Calu3 (cell line): ENCODE measurements at regions of chr17 and their contacts with region 1.

Region 1: GRCh38 chr17:13460261-13461000 is 141.3 kb downstream of the HS3ST3A1 start:
- DNase-seq: no peak
- H3K4me3 Mint-ChIP-seq: no peak overlapping the region
- H3K27ac Mint-ChIP-seq: no peak overlapping the region
- H3K4me1 Mint-ChIP-seq: no peaks in the 10 kb centered on the region
- H3K27me3 Mint-ChIP-seq: no peaks in the 10 kb centered on the region
- CTCF ChIP-seq: no peak

Region 2: DNA sequence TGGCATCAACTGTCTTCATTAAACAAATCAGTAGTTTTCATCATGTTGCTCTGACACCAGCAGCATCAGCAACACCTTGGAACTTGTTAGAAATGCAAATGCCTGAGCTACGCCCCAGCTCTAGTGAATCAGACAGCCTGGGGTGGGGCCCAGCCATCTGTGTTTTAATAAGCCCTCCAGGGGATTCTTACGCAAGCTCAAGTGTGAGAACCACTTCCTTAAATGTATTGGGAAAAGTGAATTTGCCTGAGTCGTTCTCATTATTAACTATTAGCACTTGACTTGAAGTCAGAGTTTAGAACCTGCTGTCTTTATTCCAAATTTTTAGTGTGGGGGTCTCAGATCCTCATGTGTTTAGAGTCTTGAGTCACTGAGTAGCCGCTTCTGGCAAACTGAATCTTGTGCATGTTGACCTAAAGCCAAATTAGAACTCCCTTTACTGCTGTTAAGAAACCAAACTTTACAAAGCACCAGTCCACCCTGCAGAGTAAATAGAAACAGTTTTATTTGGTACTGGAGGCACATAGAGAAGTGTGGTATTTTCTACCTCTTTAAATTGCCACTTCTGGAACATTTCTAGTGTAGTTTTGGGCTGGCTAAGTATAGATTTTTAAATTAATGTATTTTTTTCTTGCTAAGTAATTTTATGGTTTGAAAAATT is 471.5 kb after region 1 on chr17:
- CTCF ChIA-PET with region 1: no interaction called
- intact Hi-C with region 1: no loop called
- DNase-seq: no peak
- H3K4me3 Mint-ChIP-seq: no peak overlapping the region
- H3K27ac Mint-ChIP-seq: no peak overlapping the region
- H3K4me1 Mint-ChIP-seq: no peaks in the 10 kb centered on the region
- H3K27me3 Mint-ChIP-seq: no peaks in the 10 kb centered on the region
- CTCF ChIP-seq: no peak

Region 3: GRCh38 chr17:15076991-15077663 is 1616.7 kb after region 1 on chr17:
- CTCF ChIA-PET with region 1: interaction called, 10 read pairs
- intact Hi-C with region 1: no loop called
- DNase-seq: no peak
- H3K4me3 Mint-ChIP-seq: no peak overlapping the region
- H3K27ac Mint-ChIP-seq: no peak overlapping the region
- H3K4me1 Mint-ChIP-seq: no peaks in the 10 kb centered on the region
- H3K27me3 Mint-ChIP-seq: peaks cover 12% of the 10 kb centered on the region
- CTCF ChIP-seq: no peak